Mammary epithelial cell (primary cell): ENCODE measurements at regions of chr12 and their contacts with region 1.

Region 1: GRCh38 chr12:43349863-43350262 is 202.1 kb downstream of the ADAMTS20 start:
- DNase-seq: no peak
- H3K4me3 ChIP-seq: no peak overlapping the region
- H3K27ac ChIP-seq: no peak overlapping the region
- H3K4me1 ChIP-seq: no peaks in the 10 kb centered on the region
- H3K27me3 ChIP-seq: no peaks in the 10 kb centered on the region
- CTCF ChIP-seq: peak; percentile 36 to 41

Region 2: GRCh38 chr12:43309959-43310358 is 39.9 kb before region 1 on chr12:
- CTCF ChIA-PET with region 1: no interaction called
- dilution Hi-C with region 1: no loop called
- in situ Hi-C with region 1: no loop called
- intact Hi-C with region 1: no loop called
- DNase-seq: peak; percentile 33
- H3K4me3 ChIP-seq: no peak overlapping the region
- H3K27ac ChIP-seq: peak overlapping the region; percentile 15
- H3K4me1 ChIP-seq: peaks cover 34% of the 10 kb centered on the region
- H3K27me3 ChIP-seq: no peaks in the 10 kb centered on the region
- CTCF ChIP-seq: no peak

Region 3: GRCh38 chr12:43501703-43502102 is 151.8 kb after region 1 on chr12:
- CTCF ChIA-PET with region 1: no interaction called
- dilution Hi-C with region 1: no loop called
- in situ Hi-C with region 1: no loop called
- intact Hi-C with region 1: loop called (anchors 5 kb)
- DNase-seq: peak; percentile 11
- H3K4me3 ChIP-seq: no peak overlapping the region
- H3K27ac ChIP-seq: no peak overlapping the region
- H3K4me1 ChIP-seq: no peaks in the 10 kb centered on the region
- H3K27me3 ChIP-seq: no peaks in the 10 kb centered on the region
- CTCF ChIP-seq: peak; percentile 34 to 65

Region 4: GRCh38 chr12:43676183-43676813 is 326.4 kb after region 1 on chr12:
- CTCF ChIA-PET with region 1: no interaction called
- dilution Hi-C with region 1: no loop called
- in situ Hi-C with region 1: no loop called
- intact Hi-C with region 1: loop called (anchors 1 kb)
- DNase-seq: peak; percentile 12
- H3K4me3 ChIP-seq: no peak overlapping the region
- H3K27ac ChIP-seq: no peak overlapping the region
- H3K4me1 ChIP-seq: no peaks in the 10 kb centered on the region
- H3K27me3 ChIP-seq: peaks cover 6% of the 10 kb centered on the region
- CTCF ChIP-seq: peak; percentile 72 to 77

Region 5: GRCh38 chr12:43728117-43728516 is 378.3 kb after region 1 on chr12:
- CTCF ChIA-PET with region 1: no interaction called
- dilution Hi-C with region 1: no loop called
- in situ Hi-C with region 1: no loop called
- intact Hi-C with region 1: loop called (anchors 5 kb)
- DNase-seq: no peak
- H3K4me3 ChIP-seq: no peak overlapping the region
- H3K27ac ChIP-seq: no peak overlapping the region
- H3K4me1 ChIP-seq: no peaks in the 10 kb centered on the region
- H3K27me3 ChIP-seq: no peaks in the 10 kb centered on the region
- CTCF ChIP-seq: peak; percentile 17 to 21